Mammary epithelial cell (primary cell): ENCODE measurements at regions of chr16 and their contacts with region 1.

Region 1: GRCh38 chr16:81940781-81941560 is 70.3 kb downstream of the SDR42E1 start:
- DNase-seq: peak; percentile 63
- H3K4me3 ChIP-seq: no peak overlapping the region
- H3K27ac ChIP-seq: no peak overlapping the region
- H3K4me1 ChIP-seq: peaks cover 9% of the 10 kb centered on the region
- H3K27me3 ChIP-seq: no peaks in the 10 kb centered on the region
- CTCF ChIP-seq: peak; percentile 57 to 62

Region 2: DNA sequence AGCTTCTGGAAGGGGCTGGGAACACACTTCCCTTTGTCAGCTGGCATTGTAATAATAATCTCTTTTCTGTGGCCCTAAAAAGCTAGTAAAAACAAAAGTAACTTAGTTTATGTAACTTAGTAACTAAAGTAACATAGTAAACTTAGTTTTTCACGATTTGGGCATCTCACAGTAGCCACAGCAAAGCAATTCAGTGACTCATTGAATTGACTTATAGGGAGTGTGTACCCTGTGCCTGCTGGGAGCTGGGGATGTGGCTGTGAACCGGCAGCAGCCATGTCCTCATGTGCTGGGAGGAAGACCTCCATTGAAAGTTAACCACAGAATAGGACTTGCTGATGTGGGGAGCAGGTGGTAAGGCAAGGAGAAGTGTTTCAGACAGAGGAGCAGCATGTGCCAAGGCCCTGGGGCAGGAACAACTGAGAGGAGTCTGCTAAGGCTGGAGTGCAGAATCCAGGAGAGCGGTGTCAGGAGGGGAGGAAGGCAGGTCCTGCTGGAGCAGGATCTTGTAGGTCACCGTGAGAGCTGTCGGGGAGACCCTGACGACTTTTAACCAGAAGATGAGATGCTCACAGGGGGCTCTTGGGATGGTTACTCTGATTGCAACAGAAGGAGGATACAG is 49.1 kb before region 1 on chr16:
- CTCF ChIA-PET with region 1: no interaction called
- dilution Hi-C with region 1: no loop called
- in situ Hi-C with region 1: no loop called
- intact Hi-C with region 1: loop called (anchors 2 kb)
- DNase-seq: no peak
- H3K4me3 ChIP-seq: no peak overlapping the region
- H3K27ac ChIP-seq: no peak overlapping the region
- H3K4me1 ChIP-seq: no peaks in the 10 kb centered on the region
- H3K27me3 ChIP-seq: no peaks in the 10 kb centered on the region
- CTCF ChIP-seq: no peak

Region 3: DNA sequence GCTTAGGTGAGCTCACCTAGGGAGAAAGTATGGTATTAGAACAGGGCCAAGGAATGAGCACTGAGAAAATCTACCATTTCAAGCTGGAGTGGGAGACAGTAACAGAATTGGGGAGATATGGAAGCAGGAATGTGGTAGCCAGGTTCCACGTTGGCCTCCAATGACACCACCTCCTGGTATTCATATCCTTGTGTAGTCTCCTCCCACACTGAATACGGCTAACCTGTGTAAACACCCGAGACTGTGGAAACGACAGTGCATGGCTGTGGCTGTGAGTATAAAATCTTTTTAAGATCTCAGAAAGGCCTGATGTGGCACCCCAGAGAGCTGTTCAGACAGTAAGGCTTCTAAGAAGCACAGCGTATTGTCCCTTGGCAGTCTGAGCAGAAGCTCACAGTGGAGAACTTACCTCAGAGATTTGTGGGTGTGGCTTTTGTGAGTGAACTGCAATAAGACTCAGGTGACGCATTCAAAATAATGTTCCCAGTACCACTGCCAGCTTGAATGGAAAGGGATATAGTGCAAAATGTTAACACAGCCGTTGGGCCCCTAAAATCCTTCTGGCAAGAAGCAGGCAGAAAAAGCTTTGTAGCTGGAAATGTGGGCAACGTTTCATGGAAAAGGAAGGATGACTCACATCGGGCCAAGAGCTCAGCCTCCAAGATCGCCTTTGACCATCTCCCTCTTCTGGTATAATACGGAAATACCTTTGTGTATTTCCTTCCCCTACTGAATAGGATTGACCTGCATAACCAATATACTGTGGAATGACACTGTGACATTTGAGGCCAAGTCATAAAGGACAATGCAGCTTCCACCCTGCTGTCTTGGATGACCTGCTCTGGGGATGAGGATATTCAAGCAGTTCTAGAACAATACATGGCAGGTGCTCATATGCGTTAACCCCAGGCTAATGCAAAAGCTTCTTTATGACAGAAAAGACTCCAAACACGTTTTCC is 56.0 kb after region 1 on chr16:
- CTCF ChIA-PET with region 1: interaction called, 3 read pairs
- dilution Hi-C with region 1: no loop called
- in situ Hi-C with region 1: no loop called
- intact Hi-C with region 1: loop called (anchors 2 kb)
- DNase-seq: peak; percentile 38
- H3K4me3 ChIP-seq: no peak overlapping the region
- H3K27ac ChIP-seq: peak overlapping the region; percentile 48
- H3K4me1 ChIP-seq: peaks cover 21% of the 10 kb centered on the region
- H3K27me3 ChIP-seq: no peaks in the 10 kb centered on the region
- CTCF ChIP-seq: peak; percentile 38 to 50

Region 4: DNA sequence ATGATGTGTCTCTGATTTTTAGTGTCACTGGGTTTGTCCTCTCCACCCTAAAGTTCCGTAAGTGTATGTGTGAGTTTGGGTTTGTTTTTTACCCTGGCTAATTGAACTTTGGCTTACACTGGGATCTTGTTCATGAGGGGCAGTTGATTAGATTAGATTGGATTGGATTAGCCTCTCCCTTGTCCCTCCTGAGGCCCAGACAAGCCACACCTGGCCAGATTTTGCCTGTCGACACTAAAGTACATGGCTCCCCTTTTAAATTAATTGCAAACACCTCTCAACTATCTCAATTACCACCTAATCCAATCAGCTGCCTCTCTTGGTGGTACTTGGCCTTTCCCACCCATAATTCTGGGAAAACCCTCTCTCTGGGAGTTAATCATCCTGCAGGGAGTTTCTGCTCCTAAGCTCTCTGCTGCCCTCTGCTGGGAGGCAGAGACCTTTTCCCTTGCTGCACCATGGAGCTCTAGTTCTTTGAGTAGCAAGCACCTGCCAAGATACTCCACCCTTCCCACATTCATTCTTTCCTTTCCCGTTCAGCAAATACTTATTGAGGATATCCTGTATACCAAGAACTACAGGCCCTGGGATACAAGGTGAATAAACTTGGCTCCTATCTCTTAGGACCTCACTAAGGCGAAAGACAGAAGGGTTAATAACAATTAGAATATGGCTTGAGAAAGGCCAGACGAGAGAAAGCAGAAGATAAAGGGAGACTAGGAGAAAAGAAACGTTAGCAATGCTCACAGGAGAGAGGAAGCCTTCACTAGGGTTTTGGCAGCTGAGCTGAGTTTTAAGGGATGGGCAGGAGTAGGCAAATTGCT is 289.0 kb after region 1 on chr16:
- CTCF ChIA-PET with region 1: no interaction called
- dilution Hi-C with region 1: no loop called
- in situ Hi-C with region 1: loop called in 1 of 2 experiments (anchors 25 kb)
- intact Hi-C with region 1: loop called (anchors 1 kb)
- DNase-seq: peak; percentile 60
- H3K4me3 ChIP-seq: no peak overlapping the region
- H3K27ac ChIP-seq: no peak overlapping the region
- H3K4me1 ChIP-seq: peaks cover 14% of the 10 kb centered on the region
- H3K27me3 ChIP-seq: no peaks in the 10 kb centered on the region
- CTCF ChIP-seq: peak; percentile 90 to 96

Region 5: DNA sequence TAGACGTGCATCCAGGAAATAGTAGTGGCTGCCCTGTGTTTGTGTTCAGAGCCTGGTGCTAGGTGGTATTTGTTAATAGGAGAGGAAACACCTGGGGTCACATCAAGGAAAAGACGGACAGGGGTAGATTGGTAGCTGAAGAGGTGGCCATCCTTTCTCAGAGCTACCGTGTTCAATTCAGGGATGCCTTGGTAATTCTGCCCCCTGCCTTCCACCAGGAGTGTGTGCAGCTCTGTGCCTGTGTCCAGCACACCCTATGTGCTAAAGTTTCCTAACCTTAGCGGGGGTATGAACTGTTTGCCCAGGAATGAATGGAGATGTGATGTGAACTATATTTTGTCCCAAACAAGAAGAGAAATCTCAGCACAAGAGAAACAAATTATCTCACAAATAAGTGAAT is 403.2 kb after region 1 on chr16:
- CTCF ChIA-PET with region 1: interaction called, 9 read pairs
- dilution Hi-C with region 1: no loop called
- in situ Hi-C with region 1: no loop called
- intact Hi-C with region 1: loop called (anchors 2 kb)
- DNase-seq: no peak
- H3K4me3 ChIP-seq: no peak overlapping the region
- H3K27ac ChIP-seq: no peak overlapping the region
- H3K4me1 ChIP-seq: no peaks in the 10 kb centered on the region
- H3K27me3 ChIP-seq: peaks cover 8% of the 10 kb centered on the region
- CTCF ChIP-seq: peak; percentile 50 to 69

Region 6: DNA sequence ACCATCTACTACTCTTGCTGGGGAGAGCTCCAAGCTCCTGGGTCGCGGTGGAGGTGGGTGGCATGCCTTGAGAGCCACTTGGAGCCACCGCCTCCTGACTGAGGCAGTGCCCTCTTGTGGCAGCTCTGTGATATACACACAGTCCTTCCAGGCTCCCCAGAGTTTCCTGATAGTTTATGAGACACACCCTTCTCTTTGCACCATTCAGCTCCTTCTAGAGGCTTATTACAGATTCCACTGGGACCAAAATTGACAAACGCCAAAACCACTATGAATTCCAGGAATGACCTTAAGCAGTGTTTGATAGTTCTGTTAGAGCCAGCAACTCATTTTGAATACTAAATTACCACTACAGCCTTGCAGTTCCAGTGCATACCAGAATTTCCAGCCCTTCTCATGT is 515.7 kb after region 1 on chr16:
- CTCF ChIA-PET with region 1: no interaction called
- dilution Hi-C with region 1: no loop called
- in situ Hi-C with region 1: no loop called
- intact Hi-C with region 1: loop called (anchors 1 kb)
- DNase-seq: peak; percentile 46
- H3K4me3 ChIP-seq: no peak overlapping the region
- H3K27ac ChIP-seq: no peak overlapping the region
- H3K4me1 ChIP-seq: no peaks in the 10 kb centered on the region
- H3K27me3 ChIP-seq: peaks cover 6% of the 10 kb centered on the region
- CTCF ChIP-seq: peak; percentile 80 to 84

Region 7: DNA sequence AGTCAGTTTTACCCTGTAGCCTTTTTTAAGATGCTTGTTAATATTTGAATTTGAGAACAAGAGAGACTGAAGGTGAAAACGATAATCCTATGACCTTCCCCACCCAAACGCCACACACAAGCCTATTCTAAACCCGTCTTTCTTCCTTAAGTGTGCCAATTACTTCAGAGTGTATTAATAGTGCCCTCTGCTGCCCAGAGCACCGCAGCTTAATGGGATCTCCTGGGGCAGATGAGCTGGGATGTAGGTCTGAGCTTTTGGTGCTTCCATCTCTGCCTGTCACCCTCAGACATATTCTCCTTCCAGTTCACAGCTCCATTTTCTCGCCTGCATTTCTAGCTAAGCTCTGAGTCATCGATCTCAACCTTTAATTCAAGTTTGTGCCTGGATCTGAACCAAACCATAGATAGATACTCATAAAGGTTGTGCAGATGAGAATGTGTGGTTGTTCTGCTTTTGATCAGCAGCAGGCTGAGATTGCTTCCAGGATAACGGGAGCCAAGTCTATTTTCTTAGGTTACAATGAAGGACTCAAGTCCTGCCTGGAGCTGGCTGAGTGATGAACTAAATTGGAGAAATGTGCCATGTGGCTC is 639.4 kb after region 1 on chr16:
- CTCF ChIA-PET with region 1: no interaction called
- dilution Hi-C with region 1: no loop called
- in situ Hi-C with region 1: no loop called
- intact Hi-C with region 1: loop called (anchors 2 kb)
- DNase-seq: peak; percentile 8
- H3K4me3 ChIP-seq: no peak overlapping the region
- H3K27ac ChIP-seq: no peak overlapping the region
- H3K4me1 ChIP-seq: no peaks in the 10 kb centered on the region
- H3K27me3 ChIP-seq: no peaks in the 10 kb centered on the region
- CTCF ChIP-seq: peak; percentile 51 to 54